HEK293T (cell line): ENCODE measurements at regions of chr4 and their contacts with region 1.

Region 1: GRCh38 chr4:176207839-176208238 is 12.5 kb upstream of the SPATA4 start:
- DNase-seq: no peak

Region 2: DNA sequence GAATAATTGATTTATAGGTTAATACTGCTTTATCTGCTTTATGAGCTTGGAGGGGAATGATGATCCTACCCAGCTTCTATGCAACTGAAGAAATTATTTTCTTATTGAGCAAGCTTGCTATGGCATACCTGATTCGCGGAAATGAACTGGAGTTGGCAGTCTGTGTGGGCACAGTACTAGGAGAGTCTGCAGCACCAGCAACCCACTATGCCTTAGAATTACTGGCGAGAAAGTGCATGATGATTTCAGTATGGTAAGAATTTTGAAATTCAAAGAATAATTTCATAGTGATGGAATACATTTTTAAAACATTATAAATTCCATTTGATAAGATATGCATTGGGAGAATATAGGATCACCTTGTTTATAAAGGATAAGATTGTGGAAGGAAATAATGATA is 44.8 kb before region 1 on chr4:
- CTCF ChIA-PET with region 1: no interaction called
- POLR2A ChIA-PET with region 1: no interaction called
- DNase-seq: no peak

Region 3: DNA sequence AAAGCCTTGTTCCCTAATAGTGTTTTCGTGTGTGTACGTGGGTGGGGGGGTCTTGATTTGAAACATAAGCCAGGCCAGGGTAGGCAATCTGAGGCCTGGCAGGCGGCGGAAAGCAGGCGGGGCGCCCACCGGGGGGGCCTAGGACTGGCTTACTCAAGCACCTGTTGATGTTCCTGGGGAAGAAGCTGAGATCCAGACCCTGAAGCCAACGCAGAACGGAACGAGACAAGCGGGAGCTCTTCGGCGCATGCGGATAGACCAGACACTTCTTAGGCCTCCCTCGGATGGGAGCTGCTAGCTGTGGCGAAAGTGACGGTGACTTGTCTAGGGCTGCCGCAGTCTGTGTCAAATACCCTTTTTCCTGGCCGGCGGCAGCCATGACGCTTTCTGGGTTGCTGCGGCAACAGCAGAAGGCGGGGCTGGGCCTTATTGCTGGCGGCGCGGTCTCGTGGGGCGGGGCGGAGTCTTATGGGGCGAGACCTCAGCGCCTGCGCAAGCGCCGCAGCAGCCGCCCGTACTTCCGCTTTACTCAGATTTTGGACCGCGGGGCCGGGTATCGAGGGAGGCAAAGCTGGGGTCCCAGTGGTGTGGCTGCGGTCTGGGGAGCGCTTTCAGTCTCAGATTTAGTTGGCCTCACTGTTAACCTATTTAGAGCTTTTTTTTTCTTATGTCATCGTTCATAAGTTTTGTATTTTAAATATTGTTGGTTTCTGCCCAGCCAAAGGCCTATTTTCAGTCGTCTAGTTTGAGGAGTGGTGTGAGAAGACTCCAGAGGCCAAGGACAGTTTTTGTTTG is 12.5 kb before region 1 on chr4 and contains the start of gene SPATA4:
- CTCF ChIA-PET with region 1: no interaction called
- POLR2A ChIA-PET with region 1: interaction called, 13 read pairs
- DNase-seq: peak; percentile 93